ENCODE measurements at regions of chr4 and their contacts with region 1.

Region 1: DNA sequence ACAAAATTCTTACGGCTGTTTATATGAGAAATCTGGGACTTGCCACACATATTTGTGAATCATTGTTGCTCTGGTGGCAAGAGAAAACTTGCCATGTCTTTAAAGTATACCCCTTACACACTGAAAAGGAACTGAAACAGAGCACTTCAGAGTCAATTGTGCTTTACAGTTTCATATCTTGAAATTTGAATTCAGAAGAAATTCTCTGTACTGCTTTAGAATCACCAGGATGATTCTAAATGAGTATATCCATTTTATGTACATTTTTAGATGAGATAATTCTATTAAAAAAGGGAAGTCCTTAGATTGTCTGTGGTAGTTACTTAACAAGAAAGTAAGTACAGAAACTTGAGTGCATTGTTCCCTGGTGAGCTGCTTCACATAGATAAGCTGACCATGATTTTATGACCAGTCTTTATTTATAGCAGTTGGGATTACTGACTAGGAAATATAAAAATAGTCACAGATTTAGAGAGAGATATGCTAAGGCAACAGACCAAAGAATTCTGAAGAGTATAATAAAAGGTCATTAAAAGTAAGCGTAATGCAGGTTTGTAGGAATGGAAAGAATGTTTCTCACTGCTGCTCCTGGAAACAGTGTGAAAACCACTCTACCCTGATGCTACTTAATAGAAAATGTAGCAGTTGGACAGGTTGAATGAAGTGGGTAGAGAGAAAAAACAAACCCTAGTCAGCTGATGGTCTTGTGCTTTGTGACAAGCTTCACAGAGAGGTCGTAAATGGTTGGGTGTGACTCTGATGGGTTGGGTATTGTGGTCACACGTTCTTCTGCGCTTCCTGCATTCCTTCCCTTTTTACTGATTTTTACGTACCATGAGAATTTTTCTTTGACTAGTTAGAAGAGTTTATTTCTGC is 41.0 kb downstream of the FNIP2 start:
- DNase-seq: peak in 1 of 2 donors; percentile 57
- ATAC-seq: peak; percentile 83 to 91 (median 87)
- H3K4me3 ChIP-seq: no peak overlapping the region
- H3K4me3 Mint-ChIP-seq: peak overlapping the region; percentile 82
- H3K27ac ChIP-seq: peak overlapping the region; percentile 36
- H3K27ac Mint-ChIP-seq: peak overlapping the region; percentile 88 to 89
- H3K4me1 ChIP-seq: peaks cover 12% of the 10 kb centered on the region
- H3K4me1 Mint-ChIP-seq: peaks cover 46 to 70% of the 10 kb centered on the region in 2 donors
- H3K27me3 ChIP-seq: no peaks in the 10 kb centered on the region
- H3K27me3 Mint-ChIP-seq: no peaks in the 10 kb centered on the region
- CTCF ChIP-seq: no peak

Region 2: GRCh38 chr4:158768555-158769174 is 41.2 kb before region 1 on chr4 and contains the start of gene FNIP2:
- intact Hi-C with region 1: loop called (anchors 2 kb)
- DNase-seq: peak; percentile 74 to 85
- ATAC-seq: peak; percentile 82 to 90 (median 86)
- H3K4me3 ChIP-seq: peak within 1 kb of the TSS; percentile 50
- H3K4me3 Mint-ChIP-seq: peak within 1 kb of the TSS; percentile 99
- H3K27ac ChIP-seq: peak within 1 kb of the TSS; percentile 80
- H3K27ac Mint-ChIP-seq: peak within 1 kb of the TSS; percentile 91 to 92
- H3K4me1 ChIP-seq: peaks cover 8% of the 10 kb centered on the region
- H3K4me1 Mint-ChIP-seq: peaks cover 29 to 32% of the 10 kb centered on the region in 2 donors
- H3K27me3 ChIP-seq: no peaks in the 10 kb centered on the region
- H3K27me3 Mint-ChIP-seq: no peaks in the 10 kb centered on the region
- CTCF ChIP-seq: no peak
- total RNA-seq, gene FNIP2: 19.4 to 22.6 (median 21.8) TPM